Endothelial cell of umbilical vein (primary cell): ENCODE measurements at regions of chr9 and their contacts with region 1.

Region 1: DNA sequence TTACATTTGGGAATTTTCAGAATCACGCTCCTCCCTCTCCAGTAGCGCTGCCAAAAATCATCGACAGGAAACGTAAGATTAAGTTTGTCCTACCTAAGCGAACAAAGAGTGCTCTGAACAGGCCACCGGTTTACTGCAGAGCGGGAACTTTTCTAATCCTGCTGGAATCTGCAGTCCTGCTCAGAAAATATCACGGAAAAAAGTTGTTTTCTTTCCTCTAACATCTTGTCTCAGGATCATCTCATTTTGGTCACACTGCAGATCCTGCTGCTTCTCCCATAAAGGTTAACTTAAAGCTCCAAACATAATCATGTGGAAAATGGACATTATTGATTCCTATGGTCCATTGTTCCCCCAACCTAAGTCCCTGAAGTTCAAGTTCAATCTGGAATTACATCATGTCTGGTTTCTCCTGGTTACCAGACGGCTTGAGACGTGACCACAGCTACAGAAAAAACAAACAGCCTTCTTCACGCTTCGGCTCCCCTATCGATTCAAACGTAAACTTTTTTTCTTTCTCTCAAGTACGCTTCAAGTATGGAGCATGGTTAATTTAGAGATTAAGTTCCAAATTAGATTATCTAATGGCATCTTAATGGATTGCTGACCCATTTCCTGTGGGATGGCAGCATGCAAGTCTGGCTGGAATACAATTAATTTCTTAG is 217.6 kb downstream of the NFIB start:
- DNase-seq: peak; percentile 97
- H3K4me3 ChIP-seq: peak overlapping the region in 1 of 3 experiments; percentile 60
- H3K27ac ChIP-seq: peak overlapping the region; percentile 96
- H3K4me1 ChIP-seq: peaks cover 55% of the 10 kb centered on the region
- H3K27me3 ChIP-seq: no peaks in the 10 kb centered on the region
- CTCF ChIP-seq: no peak
- POLR2A ChIP-seq: peak; percentile 44

Region 2: GRCh38 chr9:13575558-13575957 is 520.8 kb before region 1 on chr9:
- CTCF ChIA-PET with region 1: no interaction called
- POLR2A ChIA-PET with region 1: no interaction called
- dilution Hi-C with region 1: no loop called
- intact Hi-C with region 1: loop called (anchors 5 kb)
- DNase-seq: peak; percentile 95
- H3K4me3 ChIP-seq: no peak overlapping the region
- H3K27ac ChIP-seq: peak overlapping the region; percentile 89
- H3K4me1 ChIP-seq: peaks cover 23% of the 10 kb centered on the region
- H3K27me3 ChIP-seq: no peaks in the 10 kb centered on the region
- CTCF ChIP-seq: no peak
- POLR2A ChIP-seq: no peak

Region 3: GRCh38 chr9:14030375-14031059 is 65.9 kb before region 1 on chr9:
- CTCF ChIA-PET with region 1: interaction called, 3 read pairs
- POLR2A ChIA-PET with region 1: no interaction called
- dilution Hi-C with region 1: no loop called
- intact Hi-C with region 1: loop called (anchors 1 kb)
- DNase-seq: peak; percentile 97
- H3K4me3 ChIP-seq: peak overlapping the region in 2 of 3 experiments; percentile 25 to 46
- H3K27ac ChIP-seq: peak overlapping the region; percentile 88
- H3K4me1 ChIP-seq: peaks cover 44% of the 10 kb centered on the region
- H3K27me3 ChIP-seq: no peaks in the 10 kb centered on the region
- CTCF ChIP-seq: no peak
- POLR2A ChIP-seq: peak; percentile 31

Region 4: DNA sequence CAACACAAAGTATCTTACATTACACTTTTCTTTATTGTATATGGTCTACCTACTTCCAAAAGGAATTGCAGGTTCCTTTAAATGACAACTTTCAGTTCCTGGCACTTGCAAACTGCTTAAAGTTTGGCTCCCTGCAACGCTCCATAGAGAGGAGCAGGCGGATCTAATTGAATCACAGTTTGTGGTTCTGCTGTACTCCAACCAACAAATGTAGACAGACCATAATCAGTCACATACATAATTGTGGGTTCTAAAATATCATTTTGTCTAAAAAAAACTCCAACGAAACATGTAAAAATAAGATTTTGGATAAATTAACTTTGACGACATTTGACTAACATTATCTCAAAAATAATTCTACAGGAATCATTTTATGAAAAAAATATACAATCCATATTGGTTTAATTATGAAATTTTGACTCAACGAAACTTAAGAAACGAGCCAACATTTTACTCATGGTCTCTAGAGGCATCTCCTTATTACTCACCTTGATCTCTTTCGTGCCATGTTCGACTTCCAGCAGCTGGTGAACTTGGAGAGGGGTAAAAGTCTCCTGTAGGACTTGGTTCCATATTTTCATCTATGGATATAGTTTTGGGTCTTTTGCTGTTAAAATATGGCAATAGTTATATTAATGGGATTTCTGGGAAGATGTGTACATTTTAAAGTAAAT is 49.9 kb after region 1 on chr9:
- CTCF ChIA-PET with region 1: no interaction called
- POLR2A ChIA-PET with region 1: no interaction called
- dilution Hi-C with region 1: no loop called
- intact Hi-C with region 1: no loop called
- DNase-seq: no peak
- H3K4me3 ChIP-seq: no peak overlapping the region
- H3K27ac ChIP-seq: no peak overlapping the region
- H3K4me1 ChIP-seq: no peaks in the 10 kb centered on the region
- H3K27me3 ChIP-seq: no peaks in the 10 kb centered on the region
- CTCF ChIP-seq: no peak
- POLR2A ChIP-seq: no peak

Region 5: GRCh38 chr9:14193328-14193990 is 97.1 kb after region 1 on chr9:
- CTCF ChIA-PET with region 1: no interaction called
- POLR2A ChIA-PET with region 1: no interaction called
- dilution Hi-C with region 1: no loop called
- intact Hi-C with region 1: loop called (anchors 2 kb)
- DNase-seq: peak; percentile 90
- H3K4me3 ChIP-seq: peak overlapping the region in 2 of 3 experiments; percentile 21 to 55
- H3K27ac ChIP-seq: peak overlapping the region; percentile 97
- H3K4me1 ChIP-seq: peaks cover 64% of the 10 kb centered on the region
- H3K27me3 ChIP-seq: no peaks in the 10 kb centered on the region
- CTCF ChIP-seq: no peak
- POLR2A ChIP-seq: no peak

Region 6: GRCh38 chr9:14314929-14315645 is 218.7 kb after region 1 on chr9:
- CTCF ChIA-PET with region 1: interaction called, 3 read pairs
- POLR2A ChIA-PET with region 1: no interaction called
- dilution Hi-C with region 1: no loop called
- intact Hi-C with region 1: loop called (anchors 1 kb)
- DNase-seq: peak; percentile 67
- H3K4me3 ChIP-seq: peak overlapping the region; percentile 61 to 87 (median 85)
- H3K27ac ChIP-seq: peak overlapping the region; percentile 96
- H3K4me1 ChIP-seq: peaks cover 55% of the 10 kb centered on the region
- H3K27me3 ChIP-seq: no peaks in the 10 kb centered on the region
- CTCF ChIP-seq: no peak
- POLR2A ChIP-seq: no peak

Region 7: GRCh38 chr9:14372437-14373335 is 276.3 kb after region 1 on chr9:
- CTCF ChIA-PET with region 1: no interaction called
- POLR2A ChIA-PET with region 1: no interaction called
- dilution Hi-C with region 1: no loop called
- intact Hi-C with region 1: loop called (anchors 1 kb)
- DNase-seq: peak; percentile 98
- H3K4me3 ChIP-seq: peak overlapping the region in 1 of 3 experiments; percentile 29
- H3K27ac ChIP-seq: peak overlapping the region; percentile 96
- H3K4me1 ChIP-seq: peaks cover 36% of the 10 kb centered on the region
- H3K27me3 ChIP-seq: no peaks in the 10 kb centered on the region
- CTCF ChIP-seq: no peak
- POLR2A ChIP-seq: peak; percentile 70